CD14-positive monocyte (primary cell): ENCODE measurements at regions of chr3 and their contacts with region 1.

Region 1: DNA sequence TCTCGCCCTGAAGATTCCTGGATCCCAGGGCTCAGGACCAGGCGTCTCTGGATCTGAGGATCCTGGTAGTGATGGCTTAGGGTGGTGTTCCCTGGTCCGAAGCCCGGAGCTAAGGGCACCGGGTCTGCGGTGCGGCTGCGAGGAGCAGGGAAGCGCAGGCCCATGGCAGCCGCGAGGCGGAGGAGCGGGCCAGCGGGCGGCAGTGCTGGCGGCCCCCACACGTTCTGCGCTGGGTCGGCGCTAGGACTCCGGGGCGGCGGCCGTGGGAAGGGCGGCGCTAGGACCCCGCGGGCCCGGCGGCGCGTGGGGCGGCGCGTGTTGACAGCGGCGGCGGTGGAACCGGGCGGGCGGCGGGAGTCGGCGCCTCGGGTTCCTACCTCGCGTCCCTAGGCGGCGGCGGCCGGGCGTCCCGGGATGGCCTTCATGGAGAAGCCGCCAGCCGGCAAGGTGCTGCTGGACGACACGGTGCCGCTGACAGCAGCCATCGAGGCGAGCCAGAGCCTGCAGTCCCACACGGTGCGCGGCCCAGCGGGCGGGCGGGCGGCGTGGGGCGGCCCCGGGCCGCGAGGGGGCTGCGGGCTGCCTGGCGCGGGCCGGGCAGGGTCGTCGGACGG is at the start of gene PXK:
- DNase-seq: peak; percentile 58 to 70 (median 61)
- H3K4me3 ChIP-seq: peak within 1 kb of the TSS; percentile 78 to 94 (median 92)
- H3K4me3 Mint-ChIP-seq: peak within 1 kb of the TSS; percentile 100
- H3K27ac ChIP-seq: peak within 1 kb of the TSS; percentile 65 to 94
- H3K27ac Mint-ChIP-seq: peak within 1 kb of the TSS; percentile 94 to 100 (median 98)
- H3K4me1 ChIP-seq: peaks cover 40 to 44% of the 10 kb centered on the region in 2 donors
- H3K4me1 Mint-ChIP-seq: peaks cover 46% of the 10 kb centered on the region
- H3K27me3 ChIP-seq: no peaks in the 10 kb centered on the region
- H3K27me3 Mint-ChIP-seq: peaks cover 0 to 3% (median 2%) of the 10 kb centered on the region in 3 donors
- CTCF ChIP-seq: no peak
- polyA plus RNA-seq, gene PXK: 31.5 to 54.0 (median 52.9) TPM

Region 2: DNA sequence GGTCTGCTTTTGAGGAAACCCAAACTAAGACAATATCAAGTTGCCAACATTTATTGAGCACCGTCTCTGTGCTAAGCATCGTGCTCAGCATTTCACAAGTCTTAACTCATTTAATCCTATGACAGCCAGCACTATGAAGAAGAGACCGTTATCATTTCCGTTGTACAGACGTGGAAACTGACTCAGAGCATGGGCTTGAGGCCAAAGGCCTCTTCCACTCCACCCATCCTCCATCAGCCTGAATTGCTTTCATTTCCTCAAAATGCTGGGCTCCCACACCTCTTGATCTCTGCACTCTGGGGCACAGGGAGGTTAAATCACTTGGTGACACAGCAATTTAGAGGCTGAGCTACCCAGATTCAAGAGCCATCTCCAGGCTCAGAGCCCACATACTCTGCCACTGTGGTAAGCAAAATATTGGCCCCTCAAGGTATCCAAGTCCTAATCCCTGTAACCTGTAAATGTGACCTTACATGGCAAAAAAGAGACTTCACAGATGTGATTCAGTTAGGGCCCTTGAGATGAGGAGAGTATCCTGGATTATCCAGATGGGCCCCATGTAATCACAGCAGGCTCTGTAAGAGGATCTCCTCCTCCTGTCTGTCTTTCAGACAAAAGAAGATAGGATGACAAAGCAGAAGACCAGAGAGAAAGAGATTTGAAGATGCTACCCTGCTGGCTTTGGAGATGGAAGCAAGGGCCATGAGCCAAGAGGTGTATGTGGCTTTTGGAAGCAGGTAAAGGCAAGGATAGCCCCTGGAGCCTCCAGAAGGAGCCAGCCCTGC is 348.8 kb before region 1 on chr3:
- intact Hi-C with region 1: loop called in 1 of 2 experiments (anchors 10 kb)
- DNase-seq: peak; percentile 97 to 99 (median 98)
- H3K4me3 ChIP-seq: peak overlapping the region in 1 of 3 experiments; percentile 57
- H3K4me3 Mint-ChIP-seq: peak overlapping the region; percentile 24 to 83
- H3K27ac ChIP-seq: peak overlapping the region; percentile 79 to 85
- H3K27ac Mint-ChIP-seq: peak overlapping the region; percentile 94 to 99 (median 98)
- H3K4me1 ChIP-seq: peaks cover 65 to 68% of the 10 kb centered on the region in 2 donors
- H3K4me1 Mint-ChIP-seq: peaks cover 75% of the 10 kb centered on the region
- H3K27me3 ChIP-seq: no peaks in the 10 kb centered on the region
- H3K27me3 Mint-ChIP-seq: peaks cover 0 to 15% (median 5%) of the 10 kb centered on the region in 3 donors
- CTCF ChIP-seq: no peak

Region 3: GRCh38 chr3:58299839-58300516 is 32.7 kb before region 1 on chr3:
- intact Hi-C with region 1: no loop called
- DNase-seq: peak; percentile 7 to 19 (median 17)
- H3K4me3 ChIP-seq: no peak overlapping the region
- H3K4me3 Mint-ChIP-seq: no peak overlapping the region
- H3K27ac ChIP-seq: no peak overlapping the region
- H3K27ac Mint-ChIP-seq: no peak overlapping the region
- H3K4me1 ChIP-seq: no peaks in the 10 kb centered on the region
- H3K4me1 Mint-ChIP-seq: no peaks in the 10 kb centered on the region
- H3K27me3 ChIP-seq: no peaks in the 10 kb centered on the region
- H3K27me3 Mint-ChIP-seq: peaks cover 12 to 25% (median 19%) of the 10 kb centered on the region in 3 donors
- CTCF ChIP-seq: peak; percentile 72

Region 4: GRCh38 chr3:58349792-58350626 is 17.3 kb after region 1 on chr3:
- intact Hi-C with region 1: loop called in 1 of 2 experiments (anchors 2 kb)
- DNase-seq: peak in 1 of 3 donors; percentile 34
- H3K4me3 ChIP-seq: peak overlapping the region in 1 of 3 experiments; percentile 40
- H3K4me3 Mint-ChIP-seq: peak overlapping the region in 1 of 2 donors; percentile 55
- H3K27ac ChIP-seq: peak overlapping the region; percentile 69 to 83
- H3K27ac Mint-ChIP-seq: peak overlapping the region; percentile 90 to 98 (median 93)
- H3K4me1 ChIP-seq: peaks cover 65 to 69% of the 10 kb centered on the region in 2 donors
- H3K4me1 Mint-ChIP-seq: peaks cover 79% of the 10 kb centered on the region
- H3K27me3 ChIP-seq: no peaks in the 10 kb centered on the region
- H3K27me3 Mint-ChIP-seq: no peaks in the 10 kb centered on the region
- CTCF ChIP-seq: no peak

Region 5: GRCh38 chr3:58356054-58356453 is 23.4 kb after region 1 on chr3:
- intact Hi-C with region 1: loop called (anchors 2 kb)
- DNase-seq: peak; percentile 72 to 77 (median 76)
- H3K4me3 ChIP-seq: peak overlapping the region in 1 of 3 experiments; percentile 38
- H3K4me3 Mint-ChIP-seq: peak overlapping the region in 1 of 2 donors; percentile 42
- H3K27ac ChIP-seq: peak overlapping the region; percentile 52 to 84
- H3K27ac Mint-ChIP-seq: peak overlapping the region; percentile 89 to 98 (median 98)
- H3K4me1 ChIP-seq: peaks cover 56 to 64% of the 10 kb centered on the region in 2 donors
- H3K4me1 Mint-ChIP-seq: peaks cover 63% of the 10 kb centered on the region
- H3K27me3 ChIP-seq: no peaks in the 10 kb centered on the region
- H3K27me3 Mint-ChIP-seq: peaks cover 0 to 3% (median 1%) of the 10 kb centered on the region in 3 donors
- CTCF ChIP-seq: no peak

Region 6: DNA sequence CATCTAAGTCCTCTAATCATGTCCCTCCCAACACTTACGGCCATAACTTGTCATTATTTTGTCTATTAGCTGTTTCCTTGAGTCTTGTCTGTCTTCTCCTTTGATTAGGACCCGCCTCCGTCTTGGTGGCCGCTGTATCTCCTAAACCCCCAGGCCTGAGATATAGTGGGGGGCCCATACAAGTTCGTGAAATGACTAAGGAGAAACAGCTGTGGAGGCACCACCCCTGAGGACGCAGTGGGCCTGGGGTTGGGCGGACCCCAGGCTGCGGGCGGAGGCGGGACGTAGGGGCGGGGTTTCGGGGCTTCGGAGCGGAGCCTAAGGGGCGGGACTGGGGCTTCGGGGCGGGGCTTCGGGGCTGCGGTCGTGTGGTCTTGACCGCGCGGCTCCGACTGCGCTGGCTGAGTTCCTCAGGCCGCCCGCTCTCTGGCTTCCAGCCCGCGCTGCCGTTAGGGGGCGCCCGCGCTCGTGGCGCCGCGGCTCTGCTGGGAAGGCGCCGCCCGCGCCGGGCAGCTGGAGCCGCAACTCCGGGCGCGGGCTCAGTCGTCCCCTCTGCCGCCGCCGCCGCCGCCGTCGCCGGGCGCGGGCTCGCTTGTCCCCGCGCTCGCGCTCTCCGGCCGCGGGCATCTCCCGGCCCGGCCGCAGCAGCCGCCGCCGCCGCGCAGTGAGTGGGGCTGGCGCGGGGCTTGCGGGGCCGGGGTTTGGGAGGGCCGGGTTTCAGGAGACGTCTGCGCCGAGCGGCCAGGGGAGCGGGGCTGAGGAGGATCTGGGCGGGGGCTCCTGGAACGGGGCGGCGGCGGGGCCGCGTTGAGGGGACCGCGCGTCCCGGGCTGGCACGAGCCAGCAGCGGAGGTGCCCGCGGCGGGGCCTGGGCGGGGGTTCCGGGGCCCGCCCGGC is 159.1 kb after region 1 on chr3 and contains the start of gene KCTD6:
- intact Hi-C with region 1: loop called (anchors 2 to 10 kb)
- DNase-seq: peak; percentile 93 to 95 (median 95)
- H3K4me3 ChIP-seq: peak within 1 kb of the TSS; percentile 69 to 92 (median 90)
- H3K4me3 Mint-ChIP-seq: peak within 1 kb of the TSS; percentile 94 to 99
- H3K27ac ChIP-seq: peak within 1 kb of the TSS; percentile 47 to 85
- H3K27ac Mint-ChIP-seq: peak within 1 kb of the TSS; percentile 88 to 98 (median 92)
- H3K4me1 ChIP-seq: peaks cover 41 to 66% of the 10 kb centered on the region in 2 donors
- H3K4me1 Mint-ChIP-seq: peaks cover 74% of the 10 kb centered on the region
- H3K27me3 ChIP-seq: no peaks in the 10 kb centered on the region
- H3K27me3 Mint-ChIP-seq: peaks cover 0 to 1% (median 1%) of the 10 kb centered on the region in 3 donors
- CTCF ChIP-seq: peak; percentile 60
- polyA plus RNA-seq, gene KCTD6: 11.3 to 18.9 (median 11.9) TPM

Region 7: GRCh38 chr3:58526515-58526957 is 193.9 kb after region 1 on chr3:
- intact Hi-C with region 1: loop called (anchors 5 to 10 kb)
- DNase-seq: peak; percentile 86 to 91 (median 89)
- H3K4me3 ChIP-seq: peak overlapping the region in 1 of 3 experiments; percentile 50
- H3K4me3 Mint-ChIP-seq: peak overlapping the region in 1 of 2 donors; percentile 21
- H3K27ac ChIP-seq: peak overlapping the region; percentile 59 to 83
- H3K27ac Mint-ChIP-seq: peak overlapping the region; percentile 80 to 99 (median 97)
- H3K4me1 ChIP-seq: peaks cover 21 to 36% of the 10 kb centered on the region in 2 donors
- H3K4me1 Mint-ChIP-seq: peaks cover 32% of the 10 kb centered on the region
- H3K27me3 ChIP-seq: no peaks in the 10 kb centered on the region
- H3K27me3 Mint-ChIP-seq: peaks cover 0 to 5% (median 2%) of the 10 kb centered on the region in 3 donors
- CTCF ChIP-seq: no peak